ENCODE measurements at regions of chr18 and their contacts with region 1.

Region 1: DNA sequence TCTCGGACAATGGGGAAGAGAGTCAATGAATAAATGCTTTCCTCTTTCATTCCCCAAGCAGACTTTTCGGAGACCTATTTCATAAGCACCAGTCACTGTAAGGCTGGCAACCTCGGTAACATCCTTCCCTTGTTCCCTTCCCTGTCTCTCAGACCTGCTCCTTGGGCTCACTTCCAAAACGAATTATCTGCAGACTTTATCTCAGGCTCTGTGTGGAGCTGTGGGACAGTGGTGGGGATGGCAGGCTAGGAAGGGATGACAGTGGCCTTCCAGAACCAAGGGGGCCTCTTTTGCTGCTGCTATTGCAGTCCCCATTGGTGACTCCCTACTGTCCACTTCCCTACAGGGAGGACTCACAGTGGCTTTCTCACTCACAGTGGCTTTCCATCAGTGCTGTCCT is 185.6 kb upstream of the MEX3C start:
- DNase-seq: no peak
- ATAC-seq: no peak

Region 2: DNA sequence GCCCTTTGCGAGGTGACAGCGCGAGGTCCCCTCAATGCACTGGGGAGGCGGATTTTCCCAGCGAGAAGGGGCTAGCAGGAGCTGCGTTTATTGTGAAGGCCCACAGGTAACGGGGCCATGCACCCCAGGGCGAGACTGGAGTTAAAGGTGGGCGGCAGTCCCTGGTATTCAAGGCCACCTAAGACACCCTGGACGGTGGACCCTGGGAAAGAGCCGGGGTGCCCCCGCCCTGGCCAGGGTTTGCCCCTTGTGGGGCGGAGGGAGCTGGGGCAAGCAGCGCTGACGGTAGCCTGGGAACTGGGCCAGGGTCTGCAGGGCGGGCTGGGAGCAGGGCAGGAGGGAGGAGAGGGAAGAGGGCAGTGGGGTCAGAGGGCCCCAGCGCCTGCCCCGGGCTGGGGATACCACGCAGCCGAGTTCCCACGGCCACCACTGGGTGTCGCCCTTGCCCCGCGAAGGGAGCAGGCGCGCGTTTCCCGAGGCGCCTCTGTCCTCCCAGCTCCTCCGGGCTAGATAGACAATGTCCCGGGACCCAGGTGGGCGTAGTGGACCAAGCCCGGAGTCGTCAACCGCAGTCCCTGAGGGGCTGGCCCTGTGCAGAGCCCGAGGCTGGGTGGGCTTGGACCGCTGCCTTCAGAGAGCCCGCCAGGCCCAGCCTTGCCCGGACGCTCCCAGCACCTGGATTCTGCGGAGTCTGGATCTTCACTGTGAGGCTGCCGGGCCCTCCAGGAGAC is 272.9 kb before region 1 on chr18:
- intact Hi-C with region 1: loop called (anchors 5 kb)
- DNase-seq: peak; percentile 79
- ATAC-seq: peak; percentile 87

Region 3: GRCh38 chr18:51287823-51288508 is 95.2 kb before region 1 on chr18:
- intact Hi-C with region 1: loop called (anchors 10 kb)
- DNase-seq: no peak
- ATAC-seq: peak; percentile 75

Region 4: DNA sequence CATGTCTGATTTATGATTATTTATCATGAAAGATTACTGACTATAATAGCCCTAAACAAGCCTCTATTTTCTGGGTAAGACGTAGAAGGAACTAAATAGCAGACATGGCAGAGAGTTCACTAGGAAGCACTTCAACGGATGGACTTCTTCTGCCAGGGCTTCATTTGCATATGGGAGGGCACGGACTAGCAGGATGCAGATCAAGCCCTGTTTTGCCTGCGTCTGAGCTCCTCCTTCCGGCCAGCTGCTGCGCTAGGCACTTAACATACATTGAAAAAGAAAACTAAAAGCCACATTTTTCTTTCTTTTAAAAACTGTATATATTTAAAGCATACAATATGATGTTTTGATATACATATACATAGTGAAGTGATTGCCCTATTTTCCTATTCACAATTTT is 154.4 kb after region 1 on chr18:
- intact Hi-C with region 1: loop called (anchors 10 kb)
- DNase-seq: no peak
- ATAC-seq: peak; percentile 80

Measured in Right ventricle myocardium inferior (tissue), 1 donor.